Psoas muscle (tissue), 8 donors: ENCODE measurements at regions of chr1 and their contacts with region 1.

Region 1: DNA sequence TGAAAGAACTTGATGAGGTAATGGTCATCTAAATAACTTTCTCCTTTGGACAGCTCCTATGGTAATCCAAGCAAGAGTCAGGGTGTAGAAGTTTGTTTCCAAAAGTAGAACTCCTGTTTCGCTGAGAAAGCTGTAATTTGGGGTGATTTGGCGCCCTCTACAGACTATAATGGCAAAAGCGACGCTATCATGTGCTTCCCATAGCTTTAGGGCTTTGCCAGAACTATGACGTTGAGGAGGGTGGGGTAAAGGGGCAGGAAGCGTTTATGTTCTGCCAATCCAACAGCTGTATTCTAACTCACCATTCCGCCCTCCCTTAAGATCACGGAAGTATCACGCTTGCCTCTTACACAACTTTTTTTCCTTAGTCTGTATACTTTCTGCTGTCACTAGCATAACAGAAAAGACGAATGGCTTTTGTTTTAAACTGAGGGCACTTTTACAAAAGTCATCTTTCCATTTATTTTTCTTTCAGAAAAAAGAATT is at the start of gene FMO4:
- DNase-seq: peak; percentile 70 to 75
- ATAC-seq: peak; percentile 97 to 100 (median 100)
- H3K4me3 ChIP-seq: peak within 1 kb of the TSS; percentile 50
- H3K27ac ChIP-seq: peak within 1 kb of the TSS; percentile 51
- H3K4me1 ChIP-seq: no peaks in the 10 kb centered on the region
- H3K27me3 ChIP-seq: no peaks in the 10 kb centered on the region
- CTCF ChIP-seq: peak; percentile 59
- total RNA-seq, gene FMO4: 0.59 to 1.7 (median 0.75) TPM

Region 2: DNA sequence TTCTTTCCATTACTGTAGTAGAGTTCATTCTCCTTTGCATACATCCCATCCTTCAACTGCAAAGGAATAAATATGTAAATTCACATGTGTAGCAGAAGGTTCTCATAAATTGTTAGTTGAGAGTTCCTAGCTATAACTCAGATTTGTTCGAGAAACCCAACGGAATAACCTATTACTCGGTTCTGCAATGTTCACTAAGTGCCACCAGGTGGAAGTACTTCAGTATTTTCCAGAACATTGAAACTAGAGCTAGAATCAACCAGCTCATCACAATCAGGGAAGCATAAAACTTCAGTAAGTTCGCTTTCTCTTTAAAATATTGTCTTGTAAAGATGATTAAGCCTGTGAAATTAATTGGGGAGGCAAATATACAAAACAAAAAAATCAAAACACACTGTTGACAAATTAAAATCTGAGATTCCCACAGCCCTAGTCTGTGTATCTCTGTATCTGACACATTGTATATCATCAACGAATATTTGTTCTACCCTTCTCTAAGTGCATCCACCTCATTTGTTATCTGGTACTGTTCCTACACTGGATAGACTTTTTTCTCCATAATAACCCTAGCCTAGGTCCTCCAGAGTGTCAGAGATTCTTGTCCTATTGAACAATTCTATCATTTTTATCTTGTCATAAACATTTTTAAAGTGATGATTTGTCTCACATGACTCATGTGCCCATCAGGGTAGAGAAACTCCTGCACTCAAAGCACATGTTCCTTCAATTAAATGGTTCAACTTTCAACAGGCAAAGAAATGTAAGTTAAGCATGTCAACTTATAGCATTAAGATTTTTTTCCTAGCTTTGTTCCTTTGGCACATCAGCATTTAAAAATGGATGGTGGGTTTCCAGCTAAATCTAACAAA is 346.6 kb before region 1 on chr1:
- intact Hi-C with region 1: loop called in 1 of 2 experiments (anchors 5 kb)
- DNase-seq: no peak
- ATAC-seq: peak in 1 of 4 donors; percentile 54
- H3K4me3 ChIP-seq: no peak overlapping the region
- H3K27ac ChIP-seq: no peak overlapping the region
- H3K4me1 ChIP-seq: no peaks in the 10 kb centered on the region
- H3K27me3 ChIP-seq: no peaks in the 10 kb centered on the region
- CTCF ChIP-seq: peak; percentile 50

Region 3: DNA sequence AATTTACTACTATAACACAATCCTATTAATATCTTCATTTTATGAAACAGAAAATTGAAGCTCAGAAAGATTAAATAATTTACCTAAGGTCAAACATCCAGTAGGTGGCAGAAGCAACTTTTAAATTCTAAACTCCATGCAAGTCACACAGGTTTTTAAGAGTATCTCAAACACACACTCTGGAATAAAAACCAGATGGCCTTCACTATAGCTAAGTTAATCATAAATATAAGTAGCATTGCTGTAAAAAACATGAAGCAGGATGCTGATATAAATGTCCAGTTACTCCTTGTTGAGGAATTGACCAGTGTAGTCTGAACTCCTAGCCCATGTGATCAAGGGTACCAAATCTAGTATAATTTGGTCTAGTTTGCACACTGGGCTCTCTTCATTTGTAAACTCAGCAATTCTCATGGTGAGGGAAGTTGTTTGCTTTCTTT is 232.5 kb before region 1 on chr1:
- intact Hi-C with region 1: loop called in 1 of 2 experiments (anchors 10 kb)
- DNase-seq: no peak
- ATAC-seq: no peak
- H3K4me3 ChIP-seq: no peak overlapping the region
- H3K27ac ChIP-seq: peak overlapping the region; percentile 12
- H3K4me1 ChIP-seq: no peaks in the 10 kb centered on the region
- H3K27me3 ChIP-seq: no peaks in the 10 kb centered on the region
- CTCF ChIP-seq: peak; percentile 35

Region 4: DNA sequence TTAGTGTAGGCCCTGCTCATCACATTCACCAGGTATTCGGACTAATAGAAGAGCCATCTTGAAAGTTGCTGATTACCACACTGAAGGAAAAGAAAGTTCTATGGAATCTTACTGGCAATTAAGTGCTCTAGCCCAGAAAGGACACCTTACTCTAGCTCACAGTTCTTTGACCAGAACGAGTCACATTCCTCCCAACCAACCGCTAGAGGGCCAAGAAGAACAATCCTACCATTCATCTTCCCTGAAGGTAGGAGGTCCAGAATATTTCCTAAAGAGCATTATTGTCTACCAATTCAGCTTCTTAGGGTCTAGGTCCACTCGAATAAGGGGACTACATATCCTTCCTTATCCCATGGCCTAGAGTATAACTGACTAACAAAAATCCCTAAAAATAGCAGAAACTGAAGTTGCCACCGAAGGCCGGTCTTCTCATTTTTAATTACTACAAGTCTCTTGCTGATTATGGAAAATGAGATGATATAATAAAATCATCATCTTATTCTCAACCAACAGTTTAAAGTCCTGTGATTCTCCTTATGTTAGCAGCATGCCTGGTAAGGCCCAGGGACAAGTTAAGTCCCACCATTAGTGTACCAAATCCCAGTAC is 68.3 kb before region 1 on chr1:
- intact Hi-C with region 1: loop called (anchors 1 to 5 kb)
- DNase-seq: no peak
- ATAC-seq: peak in 2 of 4 donors; percentile 30 to 49
- H3K4me3 ChIP-seq: no peak overlapping the region
- H3K27ac ChIP-seq: no peak overlapping the region
- H3K4me1 ChIP-seq: no peaks in the 10 kb centered on the region
- H3K27me3 ChIP-seq: no peaks in the 10 kb centered on the region
- CTCF ChIP-seq: peak; percentile 51